ENCODE measurements at regions of chr5 and their contacts with region 1.

Region 1: GRCh38 chr5:72860499-72860898 is 44.0 kb downstream of the TNPO1 start:
- DNase-seq: no peak
- H3K4me3 Mint-ChIP-seq: no peak overlapping the region
- H3K27ac Mint-ChIP-seq: peak overlapping the region; percentile 44
- H3K4me1 Mint-ChIP-seq: peaks cover 26% of the 10 kb centered on the region
- H3K27me3 Mint-ChIP-seq: no peaks in the 10 kb centered on the region

Region 2: GRCh38 chr5:72895758-72896157 is 35.3 kb after region 1 on chr5:
- intact Hi-C with region 1: loop called (anchors 5 kb)
- DNase-seq: no peak
- H3K4me3 Mint-ChIP-seq: no peak overlapping the region
- H3K27ac Mint-ChIP-seq: peak overlapping the region; percentile 77
- H3K4me1 Mint-ChIP-seq: peaks cover 17% of the 10 kb centered on the region
- H3K27me3 Mint-ChIP-seq: no peaks in the 10 kb centered on the region

Measured in activated T-helper 1 cell treated with anti-CD3 and anti-CD28 coated beads, Interleukin-12 subunit alpha, Interleukin-12 subunit beta, Interleukin-2, Interleukin-4 antibody, amounts not matched to agents 30 ng/mL and 10 ng/mL and 1 ng/mL, durations not matched to agents 14 hours and 24 hours and 36 hours (primary cell).